CD4-positive, alpha-beta memory T cell (primary cell): ENCODE measurements at regions of chr11 and their contacts with region 1.

Region 1: DNA sequence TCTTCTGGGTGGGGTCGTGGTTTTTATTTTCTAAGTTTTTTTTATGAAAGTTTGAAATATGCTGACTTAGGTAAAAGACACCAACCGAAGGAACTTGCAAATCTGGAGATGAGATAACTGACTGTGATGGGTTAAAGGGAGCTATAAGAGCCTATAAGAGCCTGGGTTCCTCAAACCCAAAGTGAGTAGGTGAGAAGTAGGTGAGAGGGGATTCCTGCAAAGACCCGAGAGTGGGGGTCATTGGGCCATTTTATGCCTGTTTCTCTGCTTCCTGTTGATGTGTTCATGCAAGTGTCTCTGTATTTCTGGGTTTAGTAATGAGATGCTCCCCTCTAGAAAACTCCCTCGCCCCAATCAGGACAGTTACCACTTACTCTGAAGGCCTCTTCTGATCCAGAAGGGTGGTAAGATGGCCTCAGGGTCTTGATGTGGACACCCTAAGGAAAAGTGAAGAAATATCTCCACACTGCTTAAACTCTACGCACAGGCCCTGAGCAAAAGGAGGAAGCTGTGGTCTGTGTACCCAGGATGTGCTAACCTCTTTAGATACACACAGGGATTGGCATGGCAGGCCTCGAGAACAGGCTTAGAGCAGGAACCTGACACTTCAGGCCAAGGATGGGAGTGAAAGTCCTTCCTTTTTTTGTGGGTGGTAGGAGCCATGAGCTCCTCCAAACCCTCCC is 1.8 kb downstream of the FLI1 start:
- DNase-seq: peak; percentile 51 to 73 (median 64)
- H3K4me3 ChIP-seq: peak overlapping the region; percentile 77 to 79
- H3K4me3 Mint-ChIP-seq: peak overlapping the region; percentile 94 to 99 (median 96)
- H3K27ac ChIP-seq: peak overlapping the region; percentile 77
- H3K27ac Mint-ChIP-seq: peak overlapping the region; percentile 95 to 99 (median 96)
- H3K4me1 ChIP-seq: peaks cover 59% of the 10 kb centered on the region
- H3K4me1 Mint-ChIP-seq: peaks cover 44 to 84% (median 56%) of the 10 kb centered on the region in 4 donors
- H3K27me3 ChIP-seq: no peaks in the 10 kb centered on the region
- H3K27me3 Mint-ChIP-seq: peaks cover 0 to 6% of the 10 kb centered on the region in 2 donors

Region 2: DNA sequence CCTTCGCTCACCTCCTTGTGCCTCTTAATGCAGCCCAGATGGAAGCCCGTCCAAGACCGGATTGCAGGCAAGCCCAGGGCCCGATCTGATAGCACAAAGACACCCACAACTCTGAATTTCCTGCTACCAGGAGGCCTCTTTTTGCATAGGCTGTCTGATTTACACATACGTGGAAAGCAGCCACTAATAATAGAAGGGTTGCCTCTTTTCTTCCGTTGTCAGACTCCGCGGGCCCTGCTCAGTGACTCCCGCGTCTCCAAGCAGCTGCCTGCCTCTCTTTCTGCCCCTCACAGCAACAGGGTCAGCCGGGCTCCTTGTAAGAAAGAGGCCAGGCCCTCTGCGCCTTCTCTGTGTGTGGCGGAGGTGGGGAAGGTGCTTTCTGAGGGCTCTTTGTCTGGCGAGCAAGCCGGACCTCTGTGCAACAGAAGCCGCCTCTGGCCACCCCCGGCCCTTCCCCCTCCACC is 24.9 kb after region 1 on chr11:
- CTCF ChIA-PET with region 1: interaction called, 4 read pairs
- POLR2A ChIA-PET with region 1: interaction called, 153 read pairs
- intact Hi-C with region 1: loop called (anchors 1 kb)
- DNase-seq: peak; percentile 49 to 66 (median 52)
- H3K4me3 ChIP-seq: peak overlapping the region in 1 of 2 donors; percentile 11
- H3K4me3 Mint-ChIP-seq: peak overlapping the region; percentile 80 to 94 (median 84)
- H3K27ac ChIP-seq: peak overlapping the region; percentile 47
- H3K27ac Mint-ChIP-seq: peak overlapping the region; percentile 91 to 98 (median 94)
- H3K4me1 ChIP-seq: peaks cover 100% of the 10 kb centered on the region
- H3K4me1 Mint-ChIP-seq: peaks cover 89 to 100% (median 97%) of the 10 kb centered on the region in 4 donors
- H3K27me3 ChIP-seq: no peaks in the 10 kb centered on the region
- H3K27me3 Mint-ChIP-seq: peaks cover 0 to 2% of the 10 kb centered on the region in 2 donors

Region 3: GRCh38 chr11:128733440-128734102 is 37.9 kb after region 1 on chr11:
- CTCF ChIA-PET with region 1: interaction called, 8 read pairs
- POLR2A ChIA-PET with region 1: interaction called, 67 read pairs
- intact Hi-C with region 1: loop called (anchors 5 kb)
- DNase-seq: peak in 2 of 5 donors; percentile 30 to 70
- H3K4me3 ChIP-seq: peak overlapping the region; percentile 8 to 32
- H3K4me3 Mint-ChIP-seq: peak overlapping the region; percentile 74 to 94 (median 84)
- H3K27ac ChIP-seq: peak overlapping the region; percentile 27
- H3K27ac Mint-ChIP-seq: peak overlapping the region; percentile 80 to 97 (median 88)
- H3K4me1 ChIP-seq: peaks cover 100% of the 10 kb centered on the region
- H3K4me1 Mint-ChIP-seq: peaks cover 82 to 100% (median 94%) of the 10 kb centered on the region in 4 donors
- H3K27me3 ChIP-seq: no peaks in the 10 kb centered on the region
- H3K27me3 Mint-ChIP-seq: no peaks in the 10 kb centered on the region

Region 4: GRCh38 chr11:128757235-128757711 is 61.6 kb after region 1 on chr11:
- CTCF ChIA-PET with region 1: interaction called, 8 read pairs
- POLR2A ChIA-PET with region 1: interaction called, 13 read pairs
- intact Hi-C with region 1: loop called (anchors 1 kb)
- DNase-seq: peak; percentile 64 to 85 (median 72)
- H3K4me3 ChIP-seq: no peak overlapping the region
- H3K4me3 Mint-ChIP-seq: peak overlapping the region in 6 of 8 donors; percentile 8 to 82 (median 54)
- H3K27ac ChIP-seq: peak overlapping the region; percentile 34
- H3K27ac Mint-ChIP-seq: peak overlapping the region; percentile 77 to 96 (median 94)
- H3K4me1 ChIP-seq: peaks cover 70% of the 10 kb centered on the region
- H3K4me1 Mint-ChIP-seq: peaks cover 59 to 87% (median 76%) of the 10 kb centered on the region in 4 donors
- H3K27me3 ChIP-seq: no peaks in the 10 kb centered on the region
- H3K27me3 Mint-ChIP-seq: no peaks in the 10 kb centered on the region

Region 5: GRCh38 chr11:129006161-129006560 is 310.5 kb after region 1 on chr11:
- CTCF ChIA-PET with region 1: no interaction called
- POLR2A ChIA-PET with region 1: no interaction called
- intact Hi-C with region 1: no loop called
- DNase-seq: no peak
- H3K4me3 ChIP-seq: no peak overlapping the region
- H3K4me3 Mint-ChIP-seq: no peak overlapping the region
- H3K27ac ChIP-seq: no peak overlapping the region
- H3K27ac Mint-ChIP-seq: no peak overlapping the region
- H3K4me1 ChIP-seq: no peaks in the 10 kb centered on the region
- H3K4me1 Mint-ChIP-seq: peaks cover 0 to 2% (median 0%) of the 10 kb centered on the region in 4 donors
- H3K27me3 ChIP-seq: no peaks in the 10 kb centered on the region
- H3K27me3 Mint-ChIP-seq: peaks cover 6 to 10% of the 10 kb centered on the region in 2 donors